GM10248 (cell line): ENCODE measurements at regions of chr15 and their contacts with region 1.

Region 1: DNA sequence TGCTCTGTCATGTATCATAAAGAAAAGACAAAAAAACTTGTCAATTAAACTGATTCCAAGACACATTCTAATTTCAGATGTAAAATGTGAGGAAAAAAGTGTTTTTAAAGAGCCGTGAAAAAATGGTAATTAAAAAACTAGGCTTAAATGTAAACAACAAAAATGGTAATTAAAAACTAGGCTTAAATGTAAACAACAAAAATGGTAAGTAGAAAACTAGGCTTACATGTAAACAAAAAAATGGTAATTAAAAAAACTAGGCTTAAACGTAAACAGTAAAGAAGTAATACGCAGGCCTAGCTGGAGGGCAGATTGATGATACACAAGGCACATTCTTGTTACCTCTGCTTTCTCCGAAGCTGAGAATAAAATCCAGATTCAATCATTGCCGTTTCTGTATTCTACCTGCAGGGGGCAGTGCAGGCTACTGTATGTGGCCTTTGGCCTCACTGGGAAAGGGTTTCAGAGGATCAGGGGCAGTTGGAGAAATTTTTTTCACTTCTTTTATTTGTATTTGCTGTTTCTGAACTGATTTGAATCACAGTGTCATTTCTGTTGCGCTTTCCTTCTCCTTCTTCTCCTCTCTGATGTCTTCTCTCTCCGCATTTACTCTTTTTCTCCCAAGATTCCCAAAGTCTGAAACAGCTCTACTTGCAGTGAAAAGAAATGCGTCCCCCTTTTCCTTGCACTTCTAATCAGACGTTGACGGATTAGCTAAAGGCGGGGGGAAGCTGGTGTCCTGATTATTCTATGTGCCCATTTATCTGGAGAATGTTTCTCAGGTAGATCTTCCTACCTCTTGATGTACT is 67.2 kb upstream of the MCTP2 start:
- DNase-seq: peak; percentile 43
- CTCF ChIP-seq: peak; percentile 78

Region 2: DNA sequence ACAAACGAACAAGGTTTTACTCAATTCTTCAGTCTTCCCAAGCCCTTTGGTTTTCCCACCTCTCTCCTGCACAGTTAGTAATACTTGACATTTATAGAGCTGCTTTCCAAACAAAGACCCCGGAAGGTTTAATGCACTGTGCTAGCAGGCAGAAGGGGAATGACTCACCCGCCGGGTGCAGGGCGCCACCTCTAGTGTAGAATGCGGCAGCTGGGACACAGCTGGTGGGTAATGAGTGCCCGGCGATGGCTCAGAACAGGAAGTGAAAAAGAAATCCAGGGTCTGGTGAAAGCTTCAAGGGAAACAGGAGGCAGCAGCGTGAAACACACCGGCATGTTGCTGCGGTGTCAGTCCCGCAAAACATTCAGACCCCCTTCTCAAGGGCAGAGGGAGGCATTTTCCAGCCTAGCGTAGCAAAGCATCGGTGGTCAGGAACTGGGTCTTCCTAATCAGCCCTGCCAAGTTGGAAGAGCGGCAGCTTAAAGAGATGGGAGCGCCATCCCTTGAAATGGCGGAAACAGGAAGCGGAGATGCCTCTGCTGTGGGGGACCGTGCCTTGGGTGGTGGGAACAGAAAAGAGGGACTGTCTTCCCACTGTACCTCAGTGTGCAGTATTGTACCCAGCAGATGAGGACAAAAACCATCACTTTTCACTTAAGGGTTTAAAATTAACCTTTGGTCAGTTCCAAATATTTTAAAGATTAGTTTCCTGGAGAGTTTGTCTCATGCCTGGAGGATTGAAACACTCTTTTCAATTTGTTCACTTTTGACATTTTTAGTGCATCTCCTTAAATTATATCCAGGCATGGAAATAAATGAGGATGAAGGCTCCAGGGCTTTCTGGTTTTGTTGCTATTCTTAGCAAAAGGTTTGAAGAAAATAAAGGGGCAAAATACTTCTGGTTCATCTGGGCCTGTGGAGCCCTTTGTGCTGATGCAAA is 93.6 kb before region 1 on chr15:
- CTCF ChIA-PET with region 1: no interaction called
- POLR2A ChIA-PET with region 1: no interaction called
- DNase-seq: no peak
- CTCF ChIP-seq: no peak

Region 3: GRCh38 chr15:94174399-94174802 is 10.2 kb after region 1 on chr15:
- CTCF ChIA-PET with region 1: interaction called, 10 read pairs
- POLR2A ChIA-PET with region 1: no interaction called
- DNase-seq: peak; percentile 32
- CTCF ChIP-seq: no peak

Region 4: DNA sequence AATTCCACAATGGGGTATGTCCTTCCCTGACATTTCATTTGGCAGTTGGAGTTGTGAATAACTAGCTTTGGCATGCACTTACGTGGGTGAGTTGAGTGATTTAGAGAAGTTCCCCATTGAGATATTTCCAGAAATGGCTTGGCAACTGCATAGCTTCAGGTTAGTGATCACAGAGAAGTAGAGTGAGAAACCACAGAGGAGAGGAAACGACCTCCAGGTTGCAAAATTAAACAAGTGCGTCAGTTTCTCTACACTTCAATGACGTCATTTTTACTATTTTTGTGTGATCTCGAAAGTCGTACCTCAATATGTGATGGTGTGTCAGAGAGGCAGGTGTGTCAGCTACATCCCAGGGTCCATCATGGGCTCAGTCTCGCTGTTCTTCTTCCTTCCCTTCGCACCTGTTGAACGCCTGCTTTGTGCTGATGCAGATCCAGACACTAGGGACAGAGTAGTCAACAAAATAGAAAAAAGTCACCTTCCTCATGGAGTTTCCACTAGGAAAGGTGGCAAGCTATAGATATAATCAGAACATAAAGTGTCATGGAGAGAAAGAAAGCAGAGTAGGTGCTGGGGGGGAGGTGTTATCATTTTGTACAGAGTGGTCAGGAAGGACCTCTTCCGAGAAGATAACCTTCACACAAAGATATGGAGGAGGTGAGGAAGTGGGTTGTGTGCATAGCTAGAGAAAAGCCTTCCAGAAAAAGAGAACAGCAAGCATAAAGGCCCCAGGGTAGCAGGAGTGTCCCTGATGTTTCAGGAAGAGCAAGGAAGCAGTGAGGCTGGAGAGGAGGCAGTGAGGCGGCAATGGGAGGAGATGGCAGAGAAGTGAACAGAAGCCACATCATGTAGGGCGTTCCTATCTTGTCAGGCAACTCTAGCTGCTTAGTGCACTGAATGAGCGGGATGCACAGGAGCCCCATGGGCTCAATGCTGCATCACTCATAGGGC is 142.8 kb after region 1 on chr15:
- CTCF ChIA-PET with region 1: interaction called, 15 read pairs
- POLR2A ChIA-PET with region 1: no interaction called
- DNase-seq: peak; percentile 61
- CTCF ChIP-seq: no peak

Region 5: DNA sequence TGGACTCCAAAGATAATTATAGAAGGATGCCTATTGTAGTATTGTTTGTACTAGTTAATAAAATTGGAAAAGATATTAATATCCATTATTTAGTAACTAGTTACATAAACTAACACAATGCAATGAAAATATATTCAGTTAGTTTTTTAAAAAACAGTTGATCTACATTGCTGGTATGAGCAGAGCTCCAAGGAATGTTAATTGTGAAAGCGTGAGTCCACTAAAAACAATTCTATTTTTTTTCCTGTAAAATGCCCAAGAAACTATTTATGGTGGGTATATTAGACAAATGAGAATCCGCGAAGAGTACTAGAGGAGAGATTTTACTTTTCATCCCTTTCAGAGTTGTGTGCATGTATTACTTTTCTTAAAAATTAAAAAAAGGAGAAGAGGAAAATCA is 171.4 kb after region 1 on chr15:
- CTCF ChIA-PET with region 1: interaction called, 37 read pairs
- POLR2A ChIA-PET with region 1: no interaction called
- DNase-seq: no peak
- CTCF ChIP-seq: no peak

Region 6: DNA sequence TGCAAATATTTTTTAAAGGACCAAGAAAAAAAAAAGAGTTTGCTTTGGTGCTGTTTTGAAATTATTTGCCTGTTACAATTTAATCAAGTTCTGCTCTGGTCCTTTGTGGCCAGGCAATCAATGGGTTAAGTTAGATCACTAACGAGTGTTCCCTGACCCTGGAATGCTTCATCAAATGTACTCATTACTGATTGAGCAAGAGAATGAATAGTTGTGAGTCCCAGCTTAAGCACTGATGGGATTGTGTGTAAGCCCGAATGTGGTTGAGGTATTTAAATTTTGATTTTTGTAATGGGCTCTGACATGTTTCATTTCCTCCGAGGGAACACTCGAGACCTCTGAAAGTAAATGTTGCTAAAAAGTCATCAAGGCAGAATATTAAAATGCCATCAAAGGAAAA is 766.2 kb after region 1 on chr15:
- CTCF ChIA-PET with region 1: no interaction called
- POLR2A ChIA-PET with region 1: no interaction called
- DNase-seq: no peak
- CTCF ChIP-seq: no peak